ENCODE measurements at regions of chr1 and their contacts with region 1.

Region 1: DNA sequence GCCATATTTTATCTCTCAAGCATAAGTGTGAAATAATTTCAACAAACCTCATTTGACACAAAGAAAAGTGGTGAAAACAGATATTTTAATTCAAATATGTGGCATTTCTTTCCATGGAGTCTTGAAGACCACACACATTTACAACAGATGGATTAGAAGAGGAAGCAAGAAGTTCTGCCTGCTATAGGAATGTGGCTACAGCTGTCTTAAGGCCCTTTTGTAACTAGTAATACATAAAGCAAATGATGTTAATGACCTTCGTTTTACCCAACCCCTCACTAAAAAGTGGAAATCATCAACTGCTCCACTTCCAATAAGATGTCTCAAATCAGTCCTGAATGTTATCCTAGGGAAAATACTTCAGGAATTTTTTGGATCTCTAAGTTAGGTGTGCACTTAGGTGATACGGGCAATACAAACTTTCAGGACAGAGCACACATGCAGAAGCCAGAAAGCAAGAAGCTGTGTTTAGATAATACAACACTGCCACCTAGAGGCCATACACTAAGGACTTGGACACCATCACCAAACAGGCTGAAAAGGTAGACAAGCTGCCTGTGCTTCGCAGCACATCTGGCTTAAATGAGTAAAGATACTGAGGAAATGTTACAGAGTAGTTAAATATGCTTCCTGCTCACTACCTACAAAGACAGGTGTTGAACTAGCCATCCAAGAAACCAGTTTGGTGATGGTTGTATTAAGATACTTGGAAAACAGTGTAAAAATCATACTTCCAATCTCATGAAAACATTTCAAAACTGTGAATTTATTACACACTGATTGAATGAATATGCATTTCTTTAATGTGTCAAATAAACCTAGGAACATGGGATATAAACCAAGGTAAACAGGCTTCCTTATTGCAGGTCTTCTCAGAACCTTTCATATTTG is 24.4 kb downstream of the RRAGC start:
- DNase-seq: peak; percentile 51 to 73 (median 70)
- H3K4me3 ChIP-seq: no peak overlapping the region
- H3K4me3 Mint-ChIP-seq: no peak overlapping the region
- H3K27ac ChIP-seq: no peak overlapping the region
- H3K27ac Mint-ChIP-seq: no peak overlapping the region
- H3K4me1 ChIP-seq: no peaks in the 10 kb centered on the region
- H3K4me1 Mint-ChIP-seq: peaks cover 0 to 7% (median under 1%) of the 10 kb centered on the region in 4 donors
- H3K27me3 ChIP-seq: no peaks in the 10 kb centered on the region
- H3K27me3 Mint-ChIP-seq: peaks cover 2 to 6% of the 10 kb centered on the region in 2 donors

Region 2: GRCh38 chr1:37890378-37891014 is 944.7 kb before region 1 on chr1:
- CTCF ChIA-PET with region 1: no interaction called
- POLR2A ChIA-PET with region 1: no interaction called
- intact Hi-C with region 1: loop called (anchors 5 kb)
- DNase-seq: peak in 4 of 5 donors; percentile 30 to 39 (median 36)
- H3K4me3 ChIP-seq: no peak overlapping the region
- H3K4me3 Mint-ChIP-seq: no peak overlapping the region
- H3K27ac ChIP-seq: no peak overlapping the region
- H3K27ac Mint-ChIP-seq: peak overlapping the region in 6 of 7 donors; percentile 4 to 66 (median 42)
- H3K4me1 ChIP-seq: no peaks in the 10 kb centered on the region
- H3K4me1 Mint-ChIP-seq: peaks cover 2 to 5% (median 4%) of the 10 kb centered on the region in 4 donors
- H3K27me3 ChIP-seq: no peaks in the 10 kb centered on the region
- H3K27me3 Mint-ChIP-seq: no peaks in the 10 kb centered on the region

Region 3: DNA sequence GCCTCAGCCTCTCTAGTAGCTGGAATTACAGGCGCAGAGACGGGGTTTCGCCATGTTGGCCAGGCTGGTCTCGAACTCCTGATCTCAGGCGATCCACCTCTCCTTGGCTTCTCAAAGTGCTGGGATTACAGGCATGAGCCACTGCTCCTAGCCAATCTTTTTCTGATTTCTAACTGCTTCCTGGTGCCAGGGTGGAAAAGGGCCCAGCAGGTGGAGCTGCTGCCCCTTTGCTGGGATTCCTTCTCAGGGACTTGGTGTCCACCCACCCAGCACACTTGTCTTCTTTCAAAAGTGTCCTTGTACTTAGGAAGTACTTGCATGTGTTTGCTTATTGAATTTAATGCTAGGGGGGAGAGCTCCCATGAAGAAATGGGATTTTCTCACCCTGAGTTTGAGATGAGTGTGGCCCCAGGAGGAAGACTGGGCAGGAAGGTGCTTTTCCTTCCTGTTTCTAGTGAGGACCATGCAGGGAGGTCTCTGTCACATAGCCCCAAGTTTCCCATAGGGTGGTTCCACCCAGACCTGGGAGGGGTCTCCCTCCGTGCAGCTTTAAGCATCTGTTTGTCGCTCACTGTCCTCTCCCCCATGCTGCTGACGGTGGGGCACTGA is 808.5 kb before region 1 on chr1:
- CTCF ChIA-PET with region 1: interaction called, 12 read pairs
- POLR2A ChIA-PET with region 1: no interaction called
- intact Hi-C with region 1: no loop called
- DNase-seq: peak in 1 of 5 donors; percentile 46
- H3K4me3 ChIP-seq: no peak overlapping the region
- H3K4me3 Mint-ChIP-seq: no peak overlapping the region
- H3K27ac ChIP-seq: no peak overlapping the region
- H3K27ac Mint-ChIP-seq: peak overlapping the region in 4 of 7 donors; percentile 34 to 87 (median 61)
- H3K4me1 ChIP-seq: peaks cover 43% of the 10 kb centered on the region
- H3K4me1 Mint-ChIP-seq: peaks cover 16 to 47% (median 29%) of the 10 kb centered on the region in 4 donors
- H3K27me3 ChIP-seq: no peaks in the 10 kb centered on the region
- H3K27me3 Mint-ChIP-seq: no peaks in the 10 kb centered on the region

Region 4: GRCh38 chr1:38804062-38804886 is 30.9 kb before region 1 on chr1:
- CTCF ChIA-PET with region 1: no interaction called
- POLR2A ChIA-PET with region 1: no interaction called
- intact Hi-C with region 1: no loop called
- DNase-seq: no peak
- H3K4me3 ChIP-seq: no peak overlapping the region
- H3K4me3 Mint-ChIP-seq: peak overlapping the region; percentile 21 to 86 (median 54)
- H3K27ac ChIP-seq: no peak overlapping the region
- H3K27ac Mint-ChIP-seq: peak overlapping the region in 1 of 7 donors; percentile 47
- H3K4me1 ChIP-seq: no peaks in the 10 kb centered on the region
- H3K4me1 Mint-ChIP-seq: peaks cover 0 to 6% (median 4%) of the 10 kb centered on the region in 4 donors
- H3K27me3 ChIP-seq: peaks cover 27% of the 10 kb centered on the region
- H3K27me3 Mint-ChIP-seq: peaks cover 40 to 52% of the 10 kb centered on the region in 2 donors

Region 5: DNA sequence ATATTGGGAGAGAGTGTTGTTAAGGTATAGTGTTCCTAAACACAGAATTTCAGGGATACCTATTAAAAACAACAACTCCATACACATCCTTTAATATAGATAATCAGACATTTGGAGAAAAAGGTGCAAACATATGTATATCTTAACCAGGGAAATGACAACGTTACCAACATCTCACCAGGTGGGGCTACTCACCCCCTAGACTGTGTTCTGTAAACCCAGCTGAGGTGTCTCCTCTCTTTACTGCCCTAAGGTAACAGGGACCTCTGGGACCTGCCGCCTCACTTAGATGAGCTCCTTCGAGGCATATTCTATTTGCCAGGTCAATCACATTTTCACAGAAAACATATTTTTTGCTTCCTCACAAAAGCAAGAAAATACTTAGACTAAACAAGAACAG is 11.0 kb after region 1 on chr1:
- CTCF ChIA-PET with region 1: interaction called, 14 read pairs
- POLR2A ChIA-PET with region 1: no interaction called
- intact Hi-C with region 1: no loop called
- DNase-seq: no peak
- H3K4me3 ChIP-seq: no peak overlapping the region
- H3K4me3 Mint-ChIP-seq: no peak overlapping the region
- H3K27ac ChIP-seq: no peak overlapping the region
- H3K27ac Mint-ChIP-seq: peak overlapping the region in 1 of 7 donors; percentile 59
- H3K4me1 ChIP-seq: no peaks in the 10 kb centered on the region
- H3K4me1 Mint-ChIP-seq: peaks cover 10 to 23% (median 15%) of the 10 kb centered on the region in 4 donors
- H3K27me3 ChIP-seq: no peaks in the 10 kb centered on the region
- H3K27me3 Mint-ChIP-seq: no peaks in the 10 kb centered on the region

Measured in CD4-positive, alpha-beta memory T cell (primary cell).